CD8-positive, alpha-beta memory T cell (primary cell): ENCODE measurements at regions of chr1 and their contacts with region 1.

Region 1: DNA sequence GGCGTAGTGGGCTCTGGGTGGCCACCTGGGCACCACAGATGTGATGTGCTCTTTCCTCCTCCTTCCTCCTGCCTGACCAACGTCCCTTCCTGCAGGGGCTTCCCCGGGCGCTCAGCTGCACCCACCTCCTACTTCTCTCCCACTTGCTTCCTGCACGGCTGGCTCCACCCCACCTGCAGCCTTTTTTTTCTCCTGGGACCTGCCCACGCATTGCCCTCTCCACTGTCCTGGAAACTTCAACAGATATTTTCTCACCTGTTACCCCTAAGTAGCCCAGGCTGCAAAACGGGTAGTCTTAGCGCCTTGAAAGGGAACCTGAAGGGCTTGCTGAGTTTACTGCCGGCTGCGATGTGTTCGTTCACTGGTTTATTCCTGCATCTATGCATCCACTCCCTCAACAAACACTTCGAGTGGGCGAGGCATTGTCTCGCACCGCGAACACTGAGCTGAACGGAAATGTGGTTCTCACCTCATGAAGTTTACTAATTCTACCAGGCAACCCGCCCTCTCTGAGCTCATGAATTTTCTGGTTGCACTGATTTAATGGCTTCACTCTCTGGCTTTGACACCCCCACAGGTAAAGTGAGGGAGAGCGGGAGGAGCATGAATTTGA is 23.6 kb downstream of the ZBTB18 start:
- DNase-seq: peak; percentile 38 to 87 (median 81)
- H3K4me3 ChIP-seq: peak overlapping the region; percentile 63
- H3K4me3 Mint-ChIP-seq: peak overlapping the region; percentile 54 to 90 (median 83)
- H3K27ac ChIP-seq: peak overlapping the region; percentile 32
- H3K27ac Mint-ChIP-seq: peak overlapping the region; percentile 75 to 95 (median 93)
- H3K4me1 ChIP-seq: peaks cover 42% of the 10 kb centered on the region
- H3K4me1 Mint-ChIP-seq: peaks cover 26 to 31% (median 26%) of the 10 kb centered on the region in 3 donors
- H3K27me3 ChIP-seq: no peaks in the 10 kb centered on the region
- H3K27me3 Mint-ChIP-seq: peaks cover 0 to 10% of the 10 kb centered on the region in 2 donors

Region 2: DNA sequence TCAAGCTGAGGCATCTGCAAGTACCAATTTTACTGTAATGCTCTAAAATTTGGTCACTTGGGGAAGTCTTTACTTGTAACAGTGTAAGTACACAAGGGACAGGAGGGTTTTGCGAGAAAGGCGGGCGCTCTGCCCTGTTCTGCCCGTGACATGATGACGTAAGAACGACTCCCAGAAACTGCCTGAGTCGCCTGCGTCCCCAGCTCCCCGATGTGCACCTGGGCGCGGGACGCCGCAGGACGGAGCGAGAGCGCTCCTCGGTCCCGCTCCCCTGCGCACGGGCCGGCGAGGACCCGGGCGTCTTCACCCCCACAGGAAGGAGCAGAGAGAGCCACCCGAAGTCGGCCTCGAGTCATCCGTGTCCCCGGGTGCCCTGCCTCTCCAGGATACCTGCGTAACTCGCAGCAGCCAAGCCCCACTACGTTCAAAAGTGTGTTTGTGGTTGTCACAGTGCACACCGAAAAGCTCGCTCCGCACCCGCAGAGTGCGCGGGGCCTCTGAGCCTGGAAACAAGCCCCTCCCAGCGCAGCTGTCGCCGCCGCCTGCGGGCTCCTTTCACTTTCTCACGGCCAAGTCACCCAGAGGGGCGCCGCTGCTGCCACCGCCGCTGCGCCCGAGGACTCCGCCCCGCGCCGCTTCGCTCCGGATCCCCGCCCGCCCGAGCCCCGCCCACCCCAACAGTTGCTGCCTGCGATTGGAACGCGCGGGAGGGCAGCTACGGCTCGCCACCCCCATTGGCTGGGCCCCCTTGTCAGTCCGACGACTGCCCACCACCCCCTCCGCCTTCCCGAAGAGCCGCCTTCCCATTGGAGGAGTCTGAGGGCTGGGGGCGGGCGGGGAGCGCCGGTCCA is 26.8 kb before region 1 on chr1:
- CTCF ChIA-PET with region 1: interaction called, 22 read pairs
- POLR2A ChIA-PET with region 1: interaction called, 54 read pairs
- DNase-seq: peak; percentile 94 to 99 (median 97)
- H3K4me3 ChIP-seq: peak overlapping the region; percentile 90
- H3K4me3 Mint-ChIP-seq: peak overlapping the region; percentile 92 to 98 (median 95)
- H3K27ac ChIP-seq: peak overlapping the region; percentile 97
- H3K27ac Mint-ChIP-seq: peak overlapping the region; percentile 94 to 99 (median 98)
- H3K4me1 ChIP-seq: peaks cover 42% of the 10 kb centered on the region
- H3K4me1 Mint-ChIP-seq: peaks cover 11 to 33% (median 17%) of the 10 kb centered on the region in 3 donors
- H3K27me3 ChIP-seq: no peaks in the 10 kb centered on the region
- H3K27me3 Mint-ChIP-seq: peaks cover 2 to 7% of the 10 kb centered on the region in 2 donors

Region 3: DNA sequence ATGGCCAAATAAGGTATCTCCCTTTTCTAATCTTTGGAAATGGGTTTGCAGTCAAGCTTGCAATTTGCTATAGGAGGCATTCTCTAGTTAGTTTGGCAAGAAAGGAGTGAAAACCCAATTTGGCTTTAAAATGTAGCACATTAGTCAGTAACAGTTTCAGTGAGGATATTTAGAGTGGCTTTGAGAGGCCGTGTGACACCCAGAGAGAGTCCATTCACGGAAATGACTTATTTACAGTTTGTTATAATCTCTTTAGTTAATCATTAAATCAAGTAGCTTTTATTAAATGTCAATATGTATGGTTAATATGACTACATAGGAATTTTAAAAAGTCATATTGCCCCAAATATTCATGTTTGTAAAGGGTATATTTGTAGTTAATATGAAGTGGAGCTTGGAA is 14.0 kb before region 1 on chr1:
- CTCF ChIA-PET with region 1: interaction called, 12 read pairs
- POLR2A ChIA-PET with region 1: interaction called, 3 read pairs
- DNase-seq: no peak
- H3K4me3 ChIP-seq: no peak overlapping the region
- H3K4me3 Mint-ChIP-seq: no peak overlapping the region
- H3K27ac ChIP-seq: no peak overlapping the region
- H3K27ac Mint-ChIP-seq: no peak overlapping the region
- H3K4me1 ChIP-seq: no peaks in the 10 kb centered on the region
- H3K4me1 Mint-ChIP-seq: peaks cover 6 to 18% (median 7%) of the 10 kb centered on the region in 3 donors
- H3K27me3 ChIP-seq: no peaks in the 10 kb centered on the region
- H3K27me3 Mint-ChIP-seq: peaks cover 0 to 6% of the 10 kb centered on the region in 2 donors